HepG2 (cell line): ENCODE measurements at regions of chr12 and their contacts with region 1.

Region 1: GRCh38 chr12:26097046-26097878 is 27.6 kb downstream of the BHLHE41 start:
- DNase-seq: peak; percentile 49
- ATAC-seq: peak; percentile 93
- H3K4me3 ChIP-seq: no peak overlapping the region
- H3K27ac ChIP-seq: no peak overlapping the region
- H3K4me1 ChIP-seq: peaks cover 11% of the 10 kb centered on the region
- H3K27me3 ChIP-seq: no peaks in the 10 kb centered on the region; a peak in 1 of 5 replicates
- CTCF ChIP-seq: peak; percentile 83
- EP300 ChIP-seq: no peak
- POLR2A ChIP-seq: no peak
- RAD21 ChIP-seq: peak; percentile 59; the same call in 1 of the 2 replicates

Region 2: DNA sequence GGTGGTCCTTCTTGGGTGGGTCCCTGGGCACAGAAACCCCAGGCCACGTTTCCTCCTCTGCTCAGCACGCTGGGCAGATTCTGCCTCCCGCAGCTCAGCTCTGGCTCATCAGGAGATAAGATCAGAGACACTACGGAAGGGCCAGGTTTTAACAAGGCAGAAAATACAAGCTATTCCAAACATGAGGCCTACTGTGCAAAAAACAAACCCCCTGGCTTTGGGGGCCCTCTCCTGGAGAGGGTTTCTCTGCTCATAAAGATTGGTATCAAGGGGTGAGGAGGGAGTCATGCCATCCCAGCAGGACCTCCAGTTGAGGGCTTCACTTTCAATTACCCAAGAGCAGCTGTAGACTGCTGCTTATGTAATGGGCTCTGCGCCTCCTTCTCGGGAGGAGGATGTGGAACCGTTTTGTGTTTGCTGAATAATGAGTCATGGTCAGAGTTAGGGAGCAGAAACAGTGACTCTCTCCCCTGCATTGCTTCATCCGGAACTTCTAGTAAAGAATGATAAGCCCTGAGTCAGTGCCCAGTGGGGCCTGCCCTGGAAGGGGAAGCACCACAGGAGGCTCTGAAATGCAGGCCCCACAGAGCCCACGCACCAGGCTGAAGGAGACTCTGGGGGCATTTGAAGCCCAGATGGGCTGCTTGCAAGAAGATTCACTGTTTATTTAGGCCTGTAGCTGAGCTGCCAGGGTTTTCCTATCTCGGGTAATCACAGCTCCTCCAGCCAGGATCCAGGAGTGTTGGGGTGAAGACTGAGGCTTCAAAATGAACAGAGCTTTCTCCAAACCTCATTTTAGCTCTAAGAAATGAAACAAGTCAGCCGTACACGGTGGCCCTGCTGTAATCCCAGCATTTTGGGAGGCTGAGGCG is 177.4 kb after region 1 on chr12:
- CTCF ChIA-PET with region 1: no interaction called
- POLR2A ChIA-PET with region 1: no interaction called
- in situ Hi-C with region 1: no loop called
- intact Hi-C with region 1: loop called (anchors 5 kb)
- DNase-seq: peak; percentile 96
- ATAC-seq: peak; percentile 97
- H3K4me3 ChIP-seq: peak overlapping the region in 2 of 3 experiments; percentile 6 to 50; a peak in 2 of 6 replicates
- H3K27ac ChIP-seq: peak overlapping the region; percentile 66
- H3K4me1 ChIP-seq: peaks cover 54% of the 10 kb centered on the region
- H3K27me3 ChIP-seq: 0 out of 5 replicates have a peak, but pooled peaks cover 0 to 4% of the 10 kb centered on the region in 2 experiments
- CTCF ChIP-seq: 0 out of 2 replicates have a peak, but pooled peaks have one; percentile 5
- EP300 ChIP-seq: peak; percentile 49 to 82; a peak in 3 of 4 replicates
- POLR2A ChIP-seq: peak in 1 of 2 experiments; percentile 80; a peak in 2 of 4 replicates
- RAD21 ChIP-seq: no peak

Region 3: DNA sequence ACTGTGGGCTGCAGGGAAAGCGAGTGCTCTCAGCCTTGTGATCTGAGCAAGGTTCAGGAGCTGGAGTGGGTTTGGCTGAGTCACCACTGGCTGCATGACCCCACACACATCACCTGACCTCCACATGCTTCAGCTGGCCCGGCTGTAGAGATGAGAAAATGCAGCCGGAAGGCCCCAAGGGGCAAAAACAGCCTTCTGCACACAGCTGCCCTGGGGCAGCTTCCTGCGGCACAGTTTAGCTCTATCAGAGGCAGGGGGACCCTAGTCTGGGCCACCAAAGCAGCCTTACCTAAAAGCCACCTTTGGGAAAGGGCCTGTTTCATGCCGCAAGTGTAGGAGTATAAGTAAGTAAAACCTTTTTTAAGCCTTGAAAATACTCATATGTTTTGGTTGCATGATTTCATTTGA is 221.4 kb after region 1 on chr12:
- CTCF ChIA-PET with region 1: no interaction called
- POLR2A ChIA-PET with region 1: no interaction called
- in situ Hi-C with region 1: no loop called
- intact Hi-C with region 1: loop called (anchors 5 kb)
- DNase-seq: peak; percentile 73
- ATAC-seq: peak; percentile 100
- H3K4me3 ChIP-seq: peak overlapping the region in 1 of 3 experiments; percentile 23; a peak in 2 of 6 replicates
- H3K27ac ChIP-seq: no peak overlapping the region
- H3K4me1 ChIP-seq: peaks cover 25% of the 10 kb centered on the region
- H3K27me3 ChIP-seq: no peaks in the 10 kb centered on the region
- CTCF ChIP-seq: no peak
- EP300 ChIP-seq: peak in 1 of 2 experiments; percentile 39; a peak in 1 of 4 replicates
- POLR2A ChIP-seq: no peak
- RAD21 ChIP-seq: no peak

Region 4: DNA sequence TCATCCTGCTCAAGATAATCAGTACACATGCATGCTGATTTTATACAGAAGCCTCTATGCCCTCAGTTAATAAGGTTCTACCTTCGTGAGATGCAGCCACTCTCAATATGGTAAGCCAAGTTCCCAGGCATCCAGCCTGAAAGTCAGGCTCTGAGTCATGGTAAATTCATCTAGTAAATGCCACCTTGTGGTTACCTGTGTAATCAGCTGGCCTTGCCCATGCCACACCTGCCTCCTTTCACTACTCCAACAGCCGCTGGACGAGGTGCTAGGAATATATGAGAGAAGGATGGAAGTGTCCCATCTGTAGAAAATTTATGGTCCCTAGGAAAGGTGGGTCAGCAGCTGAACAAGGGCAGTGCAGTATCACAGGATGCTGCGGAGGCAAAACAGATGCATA is 305.4 kb after region 1 on chr12:
- CTCF ChIA-PET with region 1: no interaction called
- POLR2A ChIA-PET with region 1: no interaction called
- in situ Hi-C with region 1: no loop called
- intact Hi-C with region 1: loop called (anchors 5 kb)
- DNase-seq: peak; percentile 7
- ATAC-seq: peak; percentile 63
- H3K4me3 ChIP-seq: no peak overlapping the region
- H3K27ac ChIP-seq: no peak overlapping the region
- H3K4me1 ChIP-seq: no peaks in the 10 kb centered on the region
- H3K27me3 ChIP-seq: no peaks in the 10 kb centered on the region
- CTCF ChIP-seq: peak; percentile 33; the same call in 1 of the 2 replicates
- EP300 ChIP-seq: no peak
- POLR2A ChIP-seq: no peak
- RAD21 ChIP-seq: no peak

Region 5: GRCh38 chr12:26651566-26652188 is 554.4 kb after region 1 on chr12:
- CTCF ChIA-PET with region 1: no interaction called
- POLR2A ChIA-PET with region 1: no interaction called
- in situ Hi-C with region 1: no loop called
- intact Hi-C with region 1: loop called (anchors 2 kb)
- DNase-seq: peak; percentile 59
- ATAC-seq: peak; percentile 69
- H3K4me3 ChIP-seq: no peak overlapping the region
- H3K27ac ChIP-seq: no peak overlapping the region
- H3K4me1 ChIP-seq: peaks cover 9% of the 10 kb centered on the region
- H3K27me3 ChIP-seq: no peaks in the 10 kb centered on the region
- CTCF ChIP-seq: peak; percentile 75
- EP300 ChIP-seq: no peak
- POLR2A ChIP-seq: no peak
- RAD21 ChIP-seq: peak; percentile 39; the same call in 1 of the 2 replicates